ENCODE measurements at regions of chr13 and their contacts with region 1.

Region 1: GRCh38 chr13:37187105-37187504 is 81.6 kb upstream of the CSNK1A1L start:
- DNase-seq: no peak
- ATAC-seq: no peak

Region 2: GRCh38 chr13:37138180-37138579 is 48.9 kb before region 1 on chr13:
- intact Hi-C with region 1: loop called in 1 of 2 experiments (anchors 10 kb)
- DNase-seq: no peak
- ATAC-seq: no peak

Measured in left cardiac atrium (tissue), 4 donors.